ENCODE measurements at regions of chr14 and their contacts with region 1.

Region 1: GRCh38 chr14:34714320-34715126 is at the start of gene CFL2:
- DNase-seq: peak; percentile 41 to 85 (median 54)
- ATAC-seq: peak; percentile 86
- H3K4me3 ChIP-seq: peak within 1 kb of the TSS; percentile 62
- H3K4me3 Mint-ChIP-seq: peak within 1 kb of the TSS; percentile 89 to 97 (median 92)
- H3K27ac ChIP-seq: peak within 1 kb of the TSS; percentile 93
- H3K27ac Mint-ChIP-seq: peak within 1 kb of the TSS; percentile 85 to 95 (median 92)
- H3K4me1 ChIP-seq: peaks cover 4 to 6% of the 10 kb centered on the region in 2 donors
- H3K4me1 Mint-ChIP-seq: peaks cover 8 to 39% (median 27%) of the 10 kb centered on the region in 7 donors
- H3K27me3 ChIP-seq: no peaks in the 10 kb centered on the region
- H3K27me3 Mint-ChIP-seq: peaks cover 0 to 20% (median 0%) of the 10 kb centered on the region in 5 donors
- total RNA-seq, gene CFL2: 5.2 to 34.2 (median 11.7) TPM

Region 2: DNA sequence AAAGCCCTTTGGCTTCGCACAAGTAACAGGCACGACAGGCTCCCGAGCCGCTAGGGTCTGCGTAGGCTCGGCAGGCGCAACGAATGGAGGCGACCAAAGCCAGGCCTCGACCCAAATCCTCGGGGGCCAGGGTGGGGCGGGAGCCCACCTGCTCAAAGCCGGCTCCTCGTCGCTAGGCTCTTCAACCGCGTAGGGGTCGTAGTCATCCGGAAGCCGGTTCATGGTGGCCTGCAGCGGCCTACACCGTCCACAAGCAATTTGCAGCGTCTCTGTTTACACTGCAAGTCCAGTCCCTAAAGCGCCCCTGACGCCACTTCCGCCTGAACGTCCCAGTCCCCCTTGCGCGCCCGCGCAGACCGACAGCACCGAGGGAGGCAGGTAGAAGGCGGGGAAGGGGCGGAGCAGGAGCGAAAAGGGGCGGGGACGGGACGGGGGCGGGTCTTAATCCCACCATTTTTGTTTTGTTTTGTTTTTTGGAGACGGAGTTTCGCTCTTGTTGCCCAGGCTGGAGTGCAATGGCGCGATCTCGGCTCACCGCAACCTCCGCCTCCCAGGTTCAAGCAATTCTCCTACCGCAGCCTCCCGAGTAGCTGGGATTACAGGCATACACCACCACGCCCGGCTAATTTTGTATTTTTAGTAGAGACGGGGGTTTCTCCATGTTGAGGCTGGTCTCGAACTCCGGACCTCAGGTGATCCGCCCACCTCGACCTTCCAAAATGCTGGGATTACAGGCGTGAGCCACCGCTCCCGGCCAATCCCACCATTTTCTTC is 174.9 kb before region 1 on chr14 and contains the start of gene EAPP:
- CTCF ChIA-PET with region 1: no interaction called
- POLR2A ChIA-PET with region 1: no interaction called
- intact Hi-C with region 1: loop called in 1 of 2 experiments (anchors 10 kb)
- DNase-seq: peak; percentile 84 to 95 (median 91)
- ATAC-seq: peak; percentile 100
- H3K4me3 ChIP-seq: peak within 1 kb of the TSS; percentile 100
- H3K4me3 Mint-ChIP-seq: peak within 1 kb of the TSS; percentile 95 to 99 (median 99)
- H3K27ac ChIP-seq: peak within 1 kb of the TSS; percentile 97
- H3K27ac Mint-ChIP-seq: peak within 1 kb of the TSS; percentile 95 to 100 (median 99)
- H3K4me1 ChIP-seq: peaks cover 18 to 24% of the 10 kb centered on the region in 2 donors
- H3K4me1 Mint-ChIP-seq: peaks cover 5 to 45% (median 31%) of the 10 kb centered on the region in 7 donors
- H3K27me3 ChIP-seq: no peaks in the 10 kb centered on the region
- H3K27me3 Mint-ChIP-seq: no peaks in the 10 kb centered on the region
- total RNA-seq, gene EAPP: 34.8 to 84.3 (median 60.9) TPM

Region 3: GRCh38 chr14:34629657-34630529 is 84.6 kb before region 1 on chr14 and contains the start of gene SNX6:
- CTCF ChIA-PET with region 1: no interaction called
- POLR2A ChIA-PET with region 1: interaction called, 4 read pairs
- intact Hi-C with region 1: loop called in 1 of 2 experiments (anchors 2 kb)
- DNase-seq: peak; percentile 75 to 87 (median 83)
- ATAC-seq: peak; percentile 100
- H3K4me3 ChIP-seq: peak within 1 kb of the TSS; percentile 72
- H3K4me3 Mint-ChIP-seq: peak within 1 kb of the TSS; percentile 89 to 100 (median 98)
- H3K27ac ChIP-seq: peak within 1 kb of the TSS; percentile 98
- H3K27ac Mint-ChIP-seq: peak within 1 kb of the TSS; percentile 92 to 97 (median 96)
- H3K4me1 ChIP-seq: peaks cover 17 to 20% of the 10 kb centered on the region in 2 donors
- H3K4me1 Mint-ChIP-seq: peaks cover 6 to 49% (median 33%) of the 10 kb centered on the region in 7 donors
- H3K27me3 ChIP-seq: no peaks in the 10 kb centered on the region
- H3K27me3 Mint-ChIP-seq: peaks cover 0 to 18% (median 0%) of the 10 kb centered on the region in 5 donors
- total RNA-seq, gene SNX6: 56.6 to 78.9 (median 59.7) TPM

Region 4: GRCh38 chr14:34671716-34672115 is 42.8 kb before region 1 on chr14:
- CTCF ChIA-PET with region 1: interaction called, 6 read pairs
- POLR2A ChIA-PET with region 1: no interaction called
- intact Hi-C with region 1: loop called in 1 of 2 experiments (anchors 2 kb)
- DNase-seq: no peak
- ATAC-seq: no peak
- H3K4me3 ChIP-seq: no peak overlapping the region
- H3K4me3 Mint-ChIP-seq: no peak overlapping the region
- H3K27ac ChIP-seq: no peak overlapping the region
- H3K27ac Mint-ChIP-seq: no peak overlapping the region
- H3K4me1 ChIP-seq: no peaks in the 10 kb centered on the region
- H3K4me1 Mint-ChIP-seq: peaks cover 0 to 1% (median 0%) of the 10 kb centered on the region in 7 donors
- H3K27me3 ChIP-seq: no peaks in the 10 kb centered on the region
- H3K27me3 Mint-ChIP-seq: peaks cover 0 to 2% (median 0%) of the 10 kb centered on the region in 5 donors

Region 5: GRCh38 chr14:34693228-34693939 is 21.1 kb before region 1 on chr14:
- CTCF ChIA-PET with region 1: no interaction called
- POLR2A ChIA-PET with region 1: no interaction called
- intact Hi-C with region 1: loop called in 1 of 2 experiments (anchors 2 kb)
- DNase-seq: peak in 4 of 9 donors; percentile 8 to 34 (median 16)
- ATAC-seq: no peak
- H3K4me3 ChIP-seq: no peak overlapping the region
- H3K4me3 Mint-ChIP-seq: peak overlapping the region; percentile 25 to 82 (median 64)
- H3K27ac ChIP-seq: no peak overlapping the region
- H3K27ac Mint-ChIP-seq: peak overlapping the region in 5 of 9 donors; percentile 11 to 70 (median 47)
- H3K4me1 ChIP-seq: peaks cover 0 to 5% of the 10 kb centered on the region in 2 donors
- H3K4me1 Mint-ChIP-seq: peaks cover 8 to 14% (median 12%) of the 10 kb centered on the region in 7 donors
- H3K27me3 ChIP-seq: no peaks in the 10 kb centered on the region
- H3K27me3 Mint-ChIP-seq: peaks cover 0 to 8% (median 0%) of the 10 kb centered on the region in 5 donors

Region 6: GRCh38 chr14:35897616-35898111 is 1183.1 kb after region 1 on chr14:
- CTCF ChIA-PET with region 1: no interaction called
- POLR2A ChIA-PET with region 1: no interaction called
- intact Hi-C with region 1: no loop called
- DNase-seq: no peak
- ATAC-seq: no peak
- H3K4me3 ChIP-seq: no peak overlapping the region
- H3K4me3 Mint-ChIP-seq: no peak overlapping the region
- H3K27ac ChIP-seq: no peak overlapping the region
- H3K27ac Mint-ChIP-seq: no peak overlapping the region
- H3K4me1 ChIP-seq: no peaks in the 10 kb centered on the region
- H3K4me1 Mint-ChIP-seq: no peaks in the 10 kb centered on the region
- H3K27me3 ChIP-seq: no peaks in the 10 kb centered on the region
- H3K27me3 Mint-ChIP-seq: peaks cover 5 to 14% (median 7%) of the 10 kb centered on the region in 5 donors